Heart left ventricle (tissue), 16 donors: ENCODE measurements at regions of chr2 and their contacts with region 1.

Region 1: DNA sequence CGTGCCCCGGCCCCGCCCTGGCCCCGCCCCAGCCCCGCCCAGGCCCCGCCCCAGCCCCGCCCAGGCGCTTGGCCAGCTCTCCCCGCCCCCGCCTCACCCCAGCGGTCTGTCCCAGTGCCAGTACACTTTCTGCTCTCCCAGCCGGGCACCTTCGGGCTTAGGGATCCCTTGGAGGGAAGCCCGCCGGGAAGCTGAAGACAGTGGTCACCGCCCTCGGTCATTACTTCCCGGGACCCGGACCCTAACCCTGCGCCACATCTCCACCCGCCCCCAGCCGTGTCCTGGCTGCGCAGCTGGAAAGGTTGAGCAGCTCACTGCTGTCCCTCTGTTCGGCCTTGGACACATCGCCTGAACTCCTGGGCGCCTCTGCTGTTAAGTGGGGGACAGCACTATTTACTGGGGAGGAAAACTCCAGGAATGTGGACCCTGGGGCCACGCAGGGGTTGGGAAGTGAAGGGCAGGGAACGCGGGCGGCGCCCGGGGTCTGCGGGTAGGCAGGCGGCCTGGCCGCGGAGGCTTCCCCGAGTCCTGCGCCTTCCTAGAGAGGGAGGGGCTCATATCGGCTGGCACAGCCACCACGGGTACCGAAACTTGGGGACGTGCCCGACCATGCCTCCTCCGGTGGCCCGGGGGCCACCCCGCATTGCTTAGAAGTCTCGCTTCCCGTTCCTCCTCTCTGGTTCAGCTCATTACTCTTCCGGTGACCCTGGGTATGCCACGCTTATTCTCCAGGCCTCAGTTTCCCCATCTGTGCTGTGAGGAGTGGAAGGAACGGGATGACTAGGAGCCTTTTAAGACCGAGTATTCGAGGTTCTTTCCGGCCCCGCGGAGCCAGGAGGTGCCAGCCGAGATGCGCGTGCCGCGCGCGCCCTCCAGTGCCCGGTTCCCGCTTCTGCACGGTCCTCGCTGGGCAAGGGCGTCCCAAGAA is 121.0 kb downstream of the GYPC start:
- DNase-seq: peak; percentile 78 to 92 (median 86)
- ATAC-seq: peak; percentile 88 to 95 (median 91)
- H3K4me3 ChIP-seq: peak overlapping the region; percentile 50 to 85 (median 66)
- H3K27ac ChIP-seq: peak overlapping the region; percentile 24 to 83 (median 75)
- H3K4me1 ChIP-seq: peaks cover 0 to 11% (median 0%) of the 10 kb centered on the region in 12 donors
- H3K27me3 ChIP-seq: peaks cover 0 to 15% (median 0%) of the 10 kb centered on the region in 9 donors
- CTCF ChIP-seq: peak; percentile 88 to 99 (median 95)
- POLR2A ChIP-seq: no peak

Region 2: DNA sequence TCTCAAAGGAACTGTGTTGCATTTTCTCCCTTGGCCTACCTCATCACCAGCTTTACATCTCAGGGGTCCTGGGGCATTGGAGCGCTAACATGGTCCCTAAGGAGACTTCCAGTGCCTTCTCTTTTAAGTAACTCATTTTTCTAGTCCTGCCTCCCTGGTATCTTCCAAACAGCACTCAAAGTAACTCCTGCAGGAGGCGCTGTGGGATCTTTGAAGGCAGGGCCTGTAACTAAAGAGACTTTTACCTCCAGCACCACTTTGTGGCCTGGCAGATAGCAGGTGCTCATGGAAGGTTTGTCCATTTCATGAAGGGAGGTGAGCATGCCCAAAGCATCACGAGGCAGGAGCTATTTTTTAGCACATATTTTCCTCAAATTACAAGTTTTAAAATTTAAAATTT is 532.0 kb before region 1 on chr2:
- intact Hi-C with region 1: loop called (anchors 1 to 10 kb)
- DNase-seq: peak in 4 of 5 donors; percentile 20 to 57 (median 32)
- ATAC-seq: no peak
- H3K4me3 ChIP-seq: no peak overlapping the region
- H3K27ac ChIP-seq: no peak overlapping the region
- H3K4me1 ChIP-seq: peaks cover 0 to 10% (median 0%) of the 10 kb centered on the region in 12 donors
- H3K27me3 ChIP-seq: no peaks in the 10 kb centered on the region
- CTCF ChIP-seq: peak; percentile 14 to 57 (median 39)
- POLR2A ChIP-seq: no peak

Region 3: GRCh38 chr2:126368758-126369157 is 408.2 kb before region 1 on chr2:
- intact Hi-C with region 1: loop called in 3 of 10 experiments (anchors 5 to 10 kb)
- DNase-seq: peak in 2 of 5 donors; percentile 23 to 29
- ATAC-seq: peak in 3 of 4 donors; percentile 31 to 61 (median 42)
- H3K4me3 ChIP-seq: no peak overlapping the region
- H3K27ac ChIP-seq: no peak overlapping the region
- H3K4me1 ChIP-seq: peaks cover 0 to 18% (median 3%) of the 10 kb centered on the region in 12 donors
- H3K27me3 ChIP-seq: no peaks in the 10 kb centered on the region
- CTCF ChIP-seq: no peak
- POLR2A ChIP-seq: no peak

Region 4: DNA sequence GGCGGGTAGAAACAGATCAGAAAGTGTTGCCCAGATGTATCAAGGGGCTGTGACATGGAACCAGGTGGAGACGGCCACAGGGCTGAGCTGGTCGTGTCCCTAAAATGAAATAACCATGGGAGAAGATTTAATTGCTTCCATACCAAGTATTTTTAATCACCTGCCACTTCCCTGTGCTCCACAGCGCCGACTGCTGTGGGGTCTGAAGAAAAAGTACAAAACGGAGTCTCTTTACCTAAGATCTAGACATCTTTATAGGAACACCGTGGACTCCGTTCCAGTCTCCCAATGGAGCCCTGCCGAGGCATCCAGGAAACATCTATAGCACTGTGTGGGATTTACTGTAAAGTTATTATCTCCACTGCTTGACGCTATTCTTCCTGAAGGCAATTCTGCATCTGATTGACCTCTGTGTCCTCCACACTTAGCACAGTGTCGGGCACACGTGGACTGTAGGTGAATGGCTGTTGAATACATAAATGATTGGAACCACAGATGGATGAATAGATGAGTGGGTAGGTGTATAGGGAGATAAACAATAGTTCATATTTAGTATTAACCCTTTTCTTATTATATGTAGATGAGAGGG is 142.6 kb before region 1 on chr2:
- intact Hi-C with region 1: loop called in 1 of 10 experiments (anchors 2 kb)
- DNase-seq: peak in 1 of 5 donors; percentile 33
- ATAC-seq: no peak
- H3K4me3 ChIP-seq: no peak overlapping the region
- H3K27ac ChIP-seq: no peak overlapping the region
- H3K4me1 ChIP-seq: peaks cover 0 to 16% (median 4%) of the 10 kb centered on the region in 12 donors
- H3K27me3 ChIP-seq: no peaks in the 10 kb centered on the region
- CTCF ChIP-seq: peak in 11 of 12 donors; percentile 8 to 53 (median 33)
- POLR2A ChIP-seq: no peak

Region 5: DNA sequence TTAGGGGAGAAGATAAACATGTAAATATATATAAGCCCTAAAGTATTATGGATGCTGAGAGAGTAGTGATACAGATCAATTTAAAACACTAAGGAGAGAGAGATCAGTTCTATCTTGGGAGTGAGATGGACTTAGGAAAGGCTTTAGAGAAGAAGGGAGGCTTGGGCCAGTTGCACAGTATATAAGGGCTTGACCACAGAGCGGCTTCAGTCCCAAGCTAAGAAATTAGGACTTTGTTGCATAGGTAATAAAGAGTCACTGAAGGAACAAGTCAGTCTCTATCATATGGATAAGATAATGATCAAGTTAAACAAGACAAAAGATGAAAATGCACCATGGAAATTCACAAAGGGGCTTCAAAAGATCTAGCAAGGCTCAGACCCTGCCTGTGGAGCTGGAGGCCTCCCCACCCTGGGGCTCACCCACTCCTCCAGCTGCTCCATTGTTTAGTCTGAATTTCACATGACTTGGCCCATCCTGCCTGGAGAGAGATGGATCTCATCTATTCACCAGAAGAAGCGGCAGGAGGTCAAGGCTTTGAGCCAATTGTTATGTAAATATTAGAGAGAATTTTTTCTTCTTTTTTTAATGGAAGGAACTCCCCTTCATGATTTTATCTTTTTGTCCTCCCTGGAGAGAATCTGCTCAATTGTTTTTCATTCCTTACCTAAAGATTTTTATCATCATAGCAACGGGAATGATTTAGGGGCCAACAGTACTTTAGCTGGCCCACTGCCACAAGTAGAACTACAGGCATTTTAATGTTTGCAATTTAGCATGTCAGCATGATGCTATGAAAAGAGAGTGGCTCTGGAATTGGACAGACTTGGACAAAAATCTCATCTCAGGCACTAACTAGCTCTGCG is 77.0 kb before region 1 on chr2:
- intact Hi-C with region 1: no loop called
- DNase-seq: peak in 2 of 5 donors; percentile 41 to 47
- ATAC-seq: peak in 2 of 4 donors; percentile 32 to 77
- H3K4me3 ChIP-seq: no peak overlapping the region
- H3K27ac ChIP-seq: peak overlapping the region in 11 of 12 donors; percentile 12 to 78 (median 64)
- H3K4me1 ChIP-seq: peaks cover 2 to 77% (median 38%) of the 10 kb centered on the region in 12 donors
- H3K27me3 ChIP-seq: no peaks in the 10 kb centered on the region
- CTCF ChIP-seq: no peak
- POLR2A ChIP-seq: no peak